Left ventricle myocardium superior (tissue), 1 donor: ENCODE measurements at regions of chr11 and their contacts with region 1.

Region 1: DNA sequence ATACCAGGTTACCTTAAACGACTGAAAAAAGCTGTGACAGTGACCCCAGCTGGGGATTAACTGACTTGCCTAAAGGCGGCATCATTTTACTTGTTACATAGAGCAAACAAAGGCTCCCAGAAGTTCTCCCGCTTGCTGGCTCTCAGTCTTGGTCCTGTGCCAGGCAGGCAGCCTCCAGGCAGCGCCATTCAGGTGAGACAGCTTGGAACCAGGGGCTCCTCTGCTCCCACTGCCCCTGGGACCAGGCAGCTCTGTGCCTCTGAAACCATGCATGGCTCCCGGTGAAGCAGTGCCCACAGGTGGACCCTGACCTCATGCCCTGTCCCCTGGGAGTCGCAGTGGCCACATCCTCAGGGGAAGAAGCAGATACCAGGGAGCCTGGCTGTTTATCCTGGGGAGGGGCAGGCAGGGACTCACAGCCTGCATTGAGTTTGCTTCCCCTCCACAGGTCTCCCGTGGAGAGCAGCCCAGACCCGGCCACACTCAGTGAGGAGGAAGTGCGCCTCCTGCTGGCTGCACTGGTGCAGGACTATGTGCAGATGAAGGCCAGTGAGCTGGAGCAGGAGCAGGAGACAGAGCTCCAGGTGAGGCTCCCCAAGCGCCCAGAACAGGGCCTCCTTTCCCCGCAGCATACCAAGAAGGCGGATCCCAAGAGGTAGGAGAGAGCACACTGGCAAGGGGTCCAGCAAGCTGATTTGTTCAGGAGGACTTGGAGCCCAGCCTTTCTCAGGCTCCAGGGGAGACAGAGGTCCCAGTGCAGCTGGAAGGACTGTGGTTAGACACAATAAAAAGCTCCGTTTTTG is 15.6 kb upstream of the CYP2R1 start:
- DNase-seq: peak; percentile 90
- ATAC-seq: peak; percentile 71

Region 2: DNA sequence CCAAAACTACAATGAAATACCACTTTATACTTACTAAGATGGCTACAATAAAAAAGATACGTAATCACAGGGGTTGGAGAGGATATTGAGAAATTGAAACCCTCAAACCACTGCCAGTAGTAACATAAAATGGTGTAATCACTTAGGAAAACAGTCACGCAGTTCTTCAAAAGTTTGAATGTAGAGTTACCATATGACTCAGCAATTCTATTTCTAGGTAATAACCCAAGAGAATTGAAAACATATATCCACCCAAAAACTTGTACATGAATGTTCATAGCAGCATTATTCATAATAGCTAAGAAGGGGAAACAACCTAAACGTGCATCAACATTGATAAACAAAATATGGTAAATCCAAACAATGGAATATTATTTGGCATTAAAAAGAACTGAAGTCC is 363.0 kb before region 1 on chr11:
- intact Hi-C with region 1: loop called (anchors 5 kb)
- DNase-seq: no peak
- ATAC-seq: no peak

Region 3: GRCh38 chr11:15074206-15075161 is 166.9 kb after region 1 on chr11:
- intact Hi-C with region 1: loop called (anchors 10 kb)
- DNase-seq: peak; percentile 92
- ATAC-seq: peak; percentile 96